PC-3 (cell line): ENCODE measurements at regions of chr13 and their contacts with region 1.

Region 1: GRCh38 chr13:100156788-100157187 is 67.9 kb downstream of the PCCA start:
- DNase-seq: peak; percentile 82
- ATAC-seq: peak; percentile 100
- H3K4me3 ChIP-seq: peak overlapping the region; percentile 18; the same call in 1 of the 2 replicates
- H3K27ac ChIP-seq: peak overlapping the region; percentile 56
- H3K4me1 ChIP-seq: peaks cover 18% of the 10 kb centered on the region
- H3K27me3 ChIP-seq: no peaks in the 10 kb centered on the region
- CTCF ChIP-seq: no peak

Region 2: GRCh38 chr13:99941086-99941485 is 215.7 kb before region 1 on chr13:
- CTCF ChIA-PET with region 1: no interaction called
- POLR2A ChIA-PET with region 1: no interaction called
- intact Hi-C with region 1: no loop called
- DNase-seq: no peak
- ATAC-seq: no peak
- H3K4me3 ChIP-seq: no peak overlapping the region
- H3K27ac ChIP-seq: no peak overlapping the region
- H3K4me1 ChIP-seq: no peaks in the 10 kb centered on the region
- H3K27me3 ChIP-seq: no peaks in the 10 kb centered on the region; the same call in 1 of the 2 replicates
- CTCF ChIP-seq: no peak

Region 3: DNA sequence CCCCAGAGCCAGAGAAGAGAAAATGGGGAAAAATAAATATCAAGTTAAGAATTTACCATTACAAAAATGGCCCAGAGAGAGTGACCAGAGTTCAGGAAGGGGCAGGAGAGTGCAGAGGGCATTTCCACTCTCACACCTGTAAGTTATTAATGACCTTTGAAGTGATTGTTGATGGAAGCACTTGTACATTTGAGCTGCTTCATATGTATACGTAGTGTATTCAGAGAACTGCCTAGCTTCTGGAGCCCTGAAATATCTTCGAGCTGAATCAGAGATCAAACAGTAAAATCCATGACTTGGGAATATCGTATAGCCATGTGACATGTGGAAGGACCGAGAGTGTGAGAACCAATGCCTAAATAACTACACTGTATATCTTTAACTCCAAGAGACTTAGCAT is 117.0 kb before region 1 on chr13:
- CTCF ChIA-PET with region 1: no interaction called
- POLR2A ChIA-PET with region 1: no interaction called
- intact Hi-C with region 1: loop called (anchors 5 kb)
- DNase-seq: peak; percentile 53
- ATAC-seq: peak; percentile 64
- H3K4me3 ChIP-seq: peak overlapping the region; percentile 30; the same call in 1 of the 2 replicates
- H3K27ac ChIP-seq: no peak overlapping the region
- H3K4me1 ChIP-seq: peaks cover 9% of the 10 kb centered on the region; the same call in 1 of the 2 replicates
- H3K27me3 ChIP-seq: no peaks in the 10 kb centered on the region
- CTCF ChIP-seq: no peak

Region 4: GRCh38 chr13:100280681-100281080 is 123.9 kb after region 1 on chr13:
- CTCF ChIA-PET with region 1: no interaction called
- POLR2A ChIA-PET with region 1: no interaction called
- intact Hi-C with region 1: no loop called
- DNase-seq: no peak
- ATAC-seq: 0 out of 2 replicates have a peak, but pooled peaks have one; percentile 33
- H3K4me3 ChIP-seq: no peak overlapping the region
- H3K27ac ChIP-seq: no peak overlapping the region
- H3K4me1 ChIP-seq: no peaks in the 10 kb centered on the region
- H3K27me3 ChIP-seq: no peaks in the 10 kb centered on the region
- CTCF ChIP-seq: no peak